ENCODE measurements at regions of chr1 and their contacts with region 1.

Region 1: GRCh38 chr1:84506002-84506728 is at the starts of genes GNG5 and SPATA1:
- DNase-seq: peak; percentile 99 to 100 (median 99)
- ATAC-seq: peak; percentile 88 to 94 (median 90)
- H3K4me3 ChIP-seq: peak within 1 kb of the TSS; percentile 68 to 90 (median 85)
- H3K27ac ChIP-seq: peak within 1 kb of the TSS; percentile 97 to 99 (median 98)
- H3K4me1 ChIP-seq: peaks cover 0 to 42% (median 6%) of the 10 kb centered on the region in 4 donors
- H3K27me3 ChIP-seq: no peaks in the 10 kb centered on the region
- CTCF ChIP-seq: no peak
- POLR2A ChIP-seq: peak; percentile 94
- total RNA-seq, gene GNG5: 44.5 to 85.0 (median 54.6) TPM
- total RNA-seq, gene SPATA1: 0.31 to 1.7 (median 0.92) TPM

Region 2: DNA sequence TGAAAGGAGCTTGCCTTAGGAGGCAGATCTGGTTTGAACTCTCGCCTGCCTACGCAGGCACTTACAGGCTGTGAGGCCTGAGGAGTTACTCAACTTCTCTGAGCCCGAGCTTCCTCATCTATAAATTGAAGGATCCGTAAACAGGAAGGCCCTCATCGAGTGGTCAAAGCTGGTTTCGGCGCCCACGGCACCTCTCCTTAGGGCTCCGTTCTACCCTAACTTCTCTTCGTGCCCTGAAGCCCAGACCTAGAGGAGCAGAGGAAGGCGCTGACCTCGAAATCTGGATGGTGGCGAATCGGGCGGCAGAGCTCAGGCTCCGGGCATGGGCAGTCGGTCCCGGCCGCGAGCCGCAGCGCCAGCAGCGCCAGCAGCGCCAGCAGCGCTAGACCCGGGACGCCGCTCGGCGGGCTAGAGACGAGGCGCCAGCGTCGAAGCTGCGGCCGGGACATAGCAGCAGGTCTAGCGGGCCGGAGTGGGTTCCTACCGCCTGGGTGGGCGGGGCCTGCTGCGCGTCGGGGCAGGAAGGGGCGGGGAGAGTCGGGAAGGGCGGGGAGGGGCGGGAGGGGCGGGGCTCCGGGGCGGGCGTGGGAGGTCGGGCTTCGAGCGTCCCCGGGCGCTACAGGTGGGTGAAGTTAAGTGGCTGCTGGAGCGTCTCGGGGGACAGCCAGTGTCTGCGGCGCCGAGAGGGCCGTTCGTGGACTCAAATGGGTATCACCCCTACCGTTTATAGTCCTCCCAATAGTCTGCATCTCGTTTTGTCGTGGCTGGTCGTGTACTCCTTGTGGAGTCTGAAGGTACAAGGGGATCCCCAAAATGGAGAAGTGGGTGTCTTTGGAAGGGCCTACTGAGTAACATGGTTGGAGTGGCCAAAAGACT is 68.0 kb after region 1 on chr1 and contains the start of gene CTBS:
- intact Hi-C with region 1: loop called in 1 of 2 experiments (anchors 10 kb)
- DNase-seq: peak; percentile 93 to 95 (median 94)
- ATAC-seq: peak; percentile 91 to 98 (median 94)
- H3K4me3 ChIP-seq: peak within 1 kb of the TSS; percentile 68 to 75 (median 73)
- H3K27ac ChIP-seq: peak within 1 kb of the TSS; percentile 98 to 100 (median 99)
- H3K4me1 ChIP-seq: peaks cover 0 to 11% (median 0%) of the 10 kb centered on the region in 4 donors
- H3K27me3 ChIP-seq: no peaks in the 10 kb centered on the region
- CTCF ChIP-seq: no peak
- POLR2A ChIP-seq: peak; percentile 93
- total RNA-seq, gene CTBS: 18.9 to 29.5 (median 24.4) TPM